WTC11 (cell line): ENCODE measurements at regions of chr11 and their contacts with region 1.

Region 1: DNA sequence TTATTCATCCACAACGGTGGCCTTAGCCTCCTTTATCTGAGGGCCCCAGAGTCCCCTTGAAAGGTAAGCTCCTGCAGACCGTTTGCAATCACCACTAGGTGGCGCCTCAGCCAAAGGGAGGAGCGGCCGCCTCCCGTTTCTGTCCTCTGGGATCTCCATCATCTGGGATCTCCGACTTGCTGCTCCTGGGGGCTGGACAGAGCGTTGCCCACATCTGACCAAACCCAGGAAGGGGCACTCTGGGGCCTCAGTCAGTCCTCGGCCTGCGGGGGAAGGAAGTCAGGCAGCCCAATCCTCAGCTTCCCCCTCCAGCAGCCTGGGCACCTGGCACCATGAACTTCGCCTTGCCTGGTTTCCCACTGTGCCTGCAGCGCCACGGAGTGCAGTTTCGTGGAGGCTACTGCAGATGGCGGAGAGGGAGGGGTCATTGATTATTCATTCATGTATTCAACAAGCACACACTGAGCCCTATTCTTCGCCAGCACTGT is 23.5 kb downstream of the TP53I11 start:
- DNase-seq: peak; percentile 89
- ATAC-seq: peak; percentile 68
- H3K4me3 Mint-ChIP-seq: no peak overlapping the region
- H3K27ac Mint-ChIP-seq: no peak overlapping the region; the same call in 1 of the 2 replicates
- H3K4me1 Mint-ChIP-seq: peaks cover 28% of the 10 kb centered on the region
- H3K27me3 Mint-ChIP-seq: no peaks in the 10 kb centered on the region; the same call in 1 of the 2 replicates
- CTCF ChIP-seq: peak; percentile 86

Region 2: DNA sequence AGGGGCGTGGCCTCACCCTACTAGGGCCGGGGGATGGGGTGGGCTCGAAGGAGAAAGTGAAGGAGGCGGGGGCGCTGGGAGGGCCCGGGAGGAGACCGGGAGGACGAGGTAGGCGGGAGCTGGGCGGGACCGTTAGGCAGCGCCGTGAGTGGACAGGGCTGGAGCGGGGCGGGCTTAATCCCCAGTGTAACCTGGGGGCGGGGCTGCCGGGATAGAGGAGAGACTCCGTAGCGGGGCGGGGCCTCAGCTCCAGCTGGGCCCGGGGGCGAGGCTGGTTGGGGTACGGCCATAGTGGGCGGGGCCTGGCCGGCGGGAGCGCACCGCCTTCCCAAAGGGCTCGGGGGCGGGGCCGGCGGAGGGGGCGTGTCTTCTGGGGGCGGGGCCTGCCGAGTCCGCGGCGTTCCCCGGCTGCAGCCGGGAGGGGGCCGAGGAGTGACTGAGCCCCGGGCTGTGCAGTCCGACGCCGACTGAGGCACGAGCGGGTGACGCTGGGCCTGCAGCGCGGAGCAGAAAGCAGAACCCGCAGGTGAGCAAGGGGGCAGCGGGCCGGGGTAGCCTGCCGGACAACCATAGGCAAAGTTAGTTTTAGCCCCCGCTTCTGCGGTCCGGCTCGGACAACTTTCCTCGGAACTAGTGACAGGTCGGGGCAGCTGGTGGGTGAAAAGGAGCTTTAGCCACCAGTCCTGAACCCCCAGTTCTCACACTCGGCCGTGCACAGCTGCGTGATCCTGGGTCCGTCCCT is 361.8 kb before region 1 on chr11 and contains the start of gene CD82:
- CTCF ChIA-PET with region 1: interaction called, 14 read pairs
- POLR2A ChIA-PET with region 1: no interaction called
- DNase-seq: peak; percentile 100
- ATAC-seq: peak; percentile 98
- H3K4me3 Mint-ChIP-seq: peak within 1 kb of the TSS; percentile 67
- H3K27ac Mint-ChIP-seq: 0 out of 2 replicates have a peak within 1 kb of the TSS, but pooled peaks have one; percentile 63
- H3K4me1 Mint-ChIP-seq: peaks cover 51% of the 10 kb centered on the region
- H3K27me3 Mint-ChIP-seq: peaks cover 48% of the 10 kb centered on the region
- CTCF ChIP-seq: no peak
- total RNA-seq, gene CD82: 15.5 to 19.8 TPM (median 19.3 TPM) in 3 replicates

Region 3: DNA sequence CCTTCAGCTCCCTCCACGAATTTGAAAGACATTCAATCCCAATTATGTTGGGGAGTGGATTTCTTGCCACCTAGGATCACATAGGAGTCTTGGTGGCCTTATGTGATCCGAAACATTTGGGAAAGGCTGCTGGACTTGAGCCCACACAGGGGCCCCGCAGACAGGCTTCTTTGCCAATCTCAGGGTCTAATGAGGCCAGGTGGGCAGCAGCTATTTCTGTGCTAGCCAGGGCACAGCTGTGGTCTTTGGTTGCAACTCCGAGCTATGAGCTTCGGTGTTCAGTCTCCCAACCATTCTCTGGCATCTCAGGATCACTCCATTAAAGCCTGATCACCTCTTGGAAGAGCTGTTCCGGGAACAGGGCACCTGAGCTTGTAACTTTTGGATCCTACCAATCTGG is 60.9 kb before region 1 on chr11:
- CTCF ChIA-PET with region 1: no interaction called
- POLR2A ChIA-PET with region 1: no interaction called
- DNase-seq: no peak
- ATAC-seq: no peak
- H3K4me3 Mint-ChIP-seq: no peak overlapping the region
- H3K27ac Mint-ChIP-seq: 0 out of 2 replicates have a peak overlapping the region, but pooled peaks have one; percentile 57
- H3K4me1 Mint-ChIP-seq: peaks cover 44% of the 10 kb centered on the region
- H3K27me3 Mint-ChIP-seq: peaks cover 2% of the 10 kb centered on the region; the same call in 1 of the 2 replicates
- CTCF ChIP-seq: no peak

Region 4: GRCh38 chr11:44877571-44878497 is 49.4 kb before region 1 on chr11:
- CTCF ChIA-PET with region 1: no interaction called
- POLR2A ChIA-PET with region 1: no interaction called
- DNase-seq: no peak
- ATAC-seq: peak; percentile 34
- H3K4me3 Mint-ChIP-seq: no peak overlapping the region
- H3K27ac Mint-ChIP-seq: no peak overlapping the region
- H3K4me1 Mint-ChIP-seq: peaks cover 3% of the 10 kb centered on the region; the same call in 1 of the 2 replicates
- H3K27me3 Mint-ChIP-seq: no peaks in the 10 kb centered on the region
- CTCF ChIP-seq: no peak

Region 5: DNA sequence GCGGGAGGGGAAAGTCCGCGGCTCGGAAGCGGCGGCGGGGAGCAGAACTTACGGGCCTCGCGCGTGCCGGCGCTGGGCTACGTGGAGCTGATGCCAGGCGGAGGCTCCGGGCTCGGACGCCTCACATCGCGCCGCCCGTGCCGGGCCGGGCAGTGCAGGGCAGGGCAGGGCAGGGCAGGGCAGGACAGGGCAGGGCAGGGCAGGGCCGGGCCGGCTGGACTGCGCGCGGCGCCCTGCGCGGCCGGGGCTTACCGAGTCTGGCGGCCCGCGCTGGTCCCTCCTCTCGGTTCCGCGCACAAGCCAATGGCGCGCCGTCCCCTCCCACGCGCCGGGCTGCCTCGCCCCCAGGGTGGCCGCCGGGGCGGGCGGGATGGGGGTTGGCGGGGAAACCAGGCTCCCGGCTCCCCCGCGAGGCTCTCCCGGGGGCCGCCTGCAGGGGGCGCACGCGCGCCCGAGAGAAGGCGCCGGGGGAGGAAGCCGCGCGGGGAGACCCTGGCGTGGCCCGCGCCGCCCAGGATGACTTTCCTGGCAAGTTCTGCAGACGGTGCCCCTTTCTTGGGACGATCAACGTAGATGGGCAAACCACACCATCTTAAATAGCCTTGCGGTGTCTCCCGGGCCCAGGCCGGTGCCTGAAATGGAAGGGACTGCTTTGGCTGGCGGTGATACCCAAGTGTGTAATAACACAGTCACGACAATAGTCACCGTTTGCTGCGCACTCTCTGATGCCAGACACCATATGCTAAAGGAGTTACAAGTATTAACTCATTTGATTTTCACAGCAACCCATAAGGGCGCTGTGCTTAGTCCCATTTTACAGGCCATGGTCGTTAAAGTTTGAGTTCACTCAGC is 23.6 kb after region 1 on chr11 and contains the start of gene TP53I11:
- CTCF ChIA-PET with region 1: interaction called, 55 read pairs
- POLR2A ChIA-PET with region 1: no interaction called
- DNase-seq: peak; percentile 43
- ATAC-seq: peak; percentile 19
- H3K4me3 Mint-ChIP-seq: peak within 1 kb of the TSS; percentile 85
- H3K27ac Mint-ChIP-seq: no peak within 1 kb of the TSS
- H3K4me1 Mint-ChIP-seq: peaks cover 58% of the 10 kb centered on the region
- H3K27me3 Mint-ChIP-seq: peaks cover 3% of the 10 kb centered on the region
- CTCF ChIP-seq: peak; percentile 87
- total RNA-seq, gene TP53I11: 42.4 to 44.2 TPM (median 42.9 TPM) in 3 replicates

Region 6: DNA sequence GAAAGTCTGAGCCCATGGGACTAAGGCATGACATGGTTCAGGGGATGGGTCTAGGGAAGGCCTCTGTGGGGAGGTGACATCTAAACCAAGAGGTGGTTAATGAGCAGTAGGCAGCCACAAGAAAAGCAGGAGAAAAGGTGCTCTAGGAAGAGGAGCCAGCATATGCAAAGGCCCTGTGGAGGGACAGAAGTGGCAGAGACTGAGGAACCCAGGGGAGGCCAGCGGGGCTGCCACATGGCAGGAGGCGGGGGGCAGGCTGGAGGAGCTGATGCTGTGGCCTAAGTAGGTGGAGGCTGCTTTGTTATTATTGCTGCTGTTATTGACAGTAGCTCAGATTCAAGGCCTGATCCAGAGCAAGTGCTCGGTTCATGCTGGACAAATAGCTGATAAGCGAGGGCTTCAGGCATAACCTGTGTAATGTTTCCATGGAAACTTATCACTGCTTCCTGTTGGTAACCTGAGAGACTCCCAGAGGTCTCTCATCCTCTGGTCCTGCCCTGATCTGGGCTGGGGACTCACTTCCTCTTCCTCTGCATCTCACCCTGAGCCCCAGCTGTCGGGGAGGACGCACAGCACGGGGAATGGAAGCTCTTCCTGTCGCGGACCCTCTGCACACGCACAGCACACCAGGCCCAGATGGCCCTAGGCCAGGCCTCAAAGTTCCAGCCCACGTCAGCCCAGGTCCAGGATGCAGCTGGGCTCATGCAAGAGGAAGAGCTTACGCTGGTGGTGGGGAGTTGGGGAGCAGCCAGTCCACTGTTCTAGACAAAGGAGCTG is 98.7 kb after region 1 on chr11:
- CTCF ChIA-PET with region 1: interaction called, 14 read pairs
- POLR2A ChIA-PET with region 1: no interaction called
- DNase-seq: no peak
- ATAC-seq: peak; percentile 43
- H3K4me3 Mint-ChIP-seq: no peak overlapping the region
- H3K27ac Mint-ChIP-seq: no peak overlapping the region
- H3K4me1 Mint-ChIP-seq: peaks cover 16% of the 10 kb centered on the region
- H3K27me3 Mint-ChIP-seq: no peaks in the 10 kb centered on the region; the same call in 1 of the 2 replicates
- CTCF ChIP-seq: no peak